ENCODE measurements at regions of chr17 and their contacts with region 1.

Region 1: GRCh38 chr17:43393944-43394482 is 4.8 kb upstream of the ARL4D start:
- DNase-seq: peak; percentile 75 to 95 (median 88)
- ATAC-seq: peak; percentile 30
- H3K4me3 Mint-ChIP-seq: peak overlapping the region in 3 of 10 donors; percentile 3 to 12 (median 8)
- H3K27ac Mint-ChIP-seq: peak overlapping the region in 8 of 10 donors; percentile 40 to 79 (median 57)
- H3K4me1 Mint-ChIP-seq: peaks cover 13 to 44% (median 27%) of the 10 kb centered on the region in 4 donors
- H3K27me3 Mint-ChIP-seq: no peaks in the 10 kb centered on the region

Region 2: GRCh38 chr17:43151880-43152456 is 242.0 kb before region 1 on chr17:
- POLR2A ChIA-PET with region 1: no interaction called
- DNase-seq: no peak
- ATAC-seq: no peak
- H3K4me3 Mint-ChIP-seq: no peak overlapping the region
- H3K27ac Mint-ChIP-seq: no peak overlapping the region
- H3K4me1 Mint-ChIP-seq: peaks cover 0 to 3% (median 0%) of the 10 kb centered on the region in 4 donors
- H3K27me3 Mint-ChIP-seq: no peaks in the 10 kb centered on the region

Region 3: DNA sequence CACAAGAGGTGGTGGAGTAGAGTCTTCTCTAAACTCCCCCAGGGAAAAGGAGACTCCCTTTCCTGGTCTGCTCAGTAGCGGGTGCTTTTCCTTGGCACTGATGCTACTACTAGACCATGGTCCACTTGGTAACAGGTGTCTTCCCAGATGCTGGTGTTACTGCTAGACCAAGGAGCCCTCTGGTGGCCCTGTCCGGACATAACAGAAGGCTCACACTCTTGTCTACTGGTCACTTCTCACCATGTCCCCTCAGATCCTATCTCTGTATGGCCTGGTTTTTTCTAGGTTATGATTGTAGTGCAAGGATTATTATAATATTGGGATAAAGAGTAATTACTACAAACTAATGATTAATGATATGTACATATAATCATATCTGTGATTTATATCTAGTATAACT is 44.9 kb before region 1 on chr17:
- POLR2A ChIA-PET with region 1: no interaction called
- DNase-seq: no peak
- ATAC-seq: no peak
- H3K4me3 Mint-ChIP-seq: no peak overlapping the region
- H3K27ac Mint-ChIP-seq: no peak overlapping the region
- H3K4me1 Mint-ChIP-seq: peaks cover 0 to 10% (median under 1%) of the 10 kb centered on the region in 4 donors
- H3K27me3 Mint-ChIP-seq: no peaks in the 10 kb centered on the region

Region 4: DNA sequence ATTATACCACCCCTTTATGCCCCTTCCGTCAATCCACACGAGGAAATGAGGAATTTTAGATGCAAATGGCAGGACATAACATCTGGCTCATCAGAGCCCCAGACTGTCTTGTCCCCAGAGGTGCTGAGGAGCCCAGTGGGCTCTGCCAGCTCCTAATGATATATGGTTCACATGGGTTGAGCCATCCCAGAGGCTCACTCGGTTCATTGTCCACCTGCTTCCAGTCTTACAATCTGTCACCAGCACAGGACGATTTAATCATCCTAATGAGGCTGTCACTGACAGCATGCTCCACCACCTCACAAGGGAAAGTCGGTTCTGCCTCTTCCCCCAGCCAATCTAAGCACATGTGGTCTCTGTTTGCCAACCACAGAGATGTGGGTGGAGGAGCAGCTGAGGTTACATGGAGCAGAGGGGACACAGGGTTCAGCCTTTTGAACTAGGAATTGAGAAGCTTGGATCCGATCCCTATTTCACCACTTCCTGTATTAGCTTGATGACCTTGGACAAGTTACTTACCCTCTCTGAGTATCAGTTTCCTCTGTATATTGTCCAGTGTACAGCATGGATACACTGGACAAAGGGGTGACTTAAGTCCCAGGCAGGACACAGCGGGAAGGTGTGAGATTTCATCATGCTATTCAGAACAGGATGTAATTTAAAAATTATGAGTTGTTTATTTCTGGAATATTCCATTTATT is 62.8 kb after region 1 on chr17:
- POLR2A ChIA-PET with region 1: no interaction called
- DNase-seq: no peak
- ATAC-seq: peak in 1 of 2 donors; percentile 57
- H3K4me3 Mint-ChIP-seq: no peak overlapping the region
- H3K27ac Mint-ChIP-seq: peak overlapping the region in 2 of 10 donors; percentile 20 to 46
- H3K4me1 Mint-ChIP-seq: peaks cover 2 to 10% (median 6%) of the 10 kb centered on the region in 4 donors
- H3K27me3 Mint-ChIP-seq: peaks cover 0 to 7% (median 0%) of the 10 kb centered on the region in 5 donors

Region 5: DNA sequence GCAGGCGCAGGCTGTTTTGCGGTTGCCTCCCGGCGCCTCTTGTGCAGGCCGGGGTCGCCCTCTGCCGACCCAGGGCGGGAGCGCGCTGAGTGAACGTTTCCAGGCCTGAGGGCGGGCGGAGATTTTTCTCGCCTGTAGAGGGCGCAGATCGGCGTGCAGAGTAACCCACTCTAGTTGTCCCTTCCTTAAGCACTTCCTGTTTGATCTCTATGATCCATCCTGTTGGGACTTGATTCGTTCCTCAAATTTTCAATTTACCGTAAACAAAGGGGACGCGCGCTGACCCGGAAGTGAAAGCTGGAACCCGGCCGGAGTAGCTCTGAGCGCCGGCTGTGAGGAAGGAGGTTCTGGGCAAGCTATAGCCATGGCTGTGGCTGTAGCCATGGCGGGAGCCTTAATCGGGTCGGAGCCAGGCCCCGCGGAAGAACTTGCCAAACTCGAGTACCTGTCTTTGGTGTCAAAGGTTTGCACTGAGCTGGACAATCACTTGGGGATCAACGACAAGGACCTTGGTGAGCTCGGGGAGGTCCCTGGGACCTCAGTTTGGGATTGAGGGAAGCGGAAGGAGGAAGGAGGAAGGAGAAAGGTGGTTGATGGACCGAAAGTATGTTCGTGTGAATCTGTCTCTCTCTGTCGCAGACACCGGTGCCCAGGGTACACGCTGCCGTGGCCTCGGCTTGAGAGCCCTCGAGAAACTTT is 89.8 kb after region 1 on chr17 and contains the start of gene DHX8:
- POLR2A ChIA-PET with region 1: interaction called, 60 read pairs
- DNase-seq: peak; percentile 96 to 99 (median 98)
- ATAC-seq: peak; percentile 94 to 96
- H3K4me3 Mint-ChIP-seq: peak within 1 kb of the TSS; percentile 95 to 100 (median 100)
- H3K27ac Mint-ChIP-seq: peak within 1 kb of the TSS; percentile 97 to 100 (median 100)
- H3K4me1 Mint-ChIP-seq: peaks cover 10 to 48% (median 35%) of the 10 kb centered on the region in 4 donors
- H3K27me3 Mint-ChIP-seq: no peaks in the 10 kb centered on the region
- polyA plus RNA-seq, gene DHX8: 16.3 to 28.4 (median 28.2) TPM

Measured in naive thymus-derived CD8-positive, alpha-beta T cell (primary cell).